Transverse colon (tissue), 4 donors: ENCODE measurements at regions of chr16 and their contacts with region 1.

Region 1: DNA sequence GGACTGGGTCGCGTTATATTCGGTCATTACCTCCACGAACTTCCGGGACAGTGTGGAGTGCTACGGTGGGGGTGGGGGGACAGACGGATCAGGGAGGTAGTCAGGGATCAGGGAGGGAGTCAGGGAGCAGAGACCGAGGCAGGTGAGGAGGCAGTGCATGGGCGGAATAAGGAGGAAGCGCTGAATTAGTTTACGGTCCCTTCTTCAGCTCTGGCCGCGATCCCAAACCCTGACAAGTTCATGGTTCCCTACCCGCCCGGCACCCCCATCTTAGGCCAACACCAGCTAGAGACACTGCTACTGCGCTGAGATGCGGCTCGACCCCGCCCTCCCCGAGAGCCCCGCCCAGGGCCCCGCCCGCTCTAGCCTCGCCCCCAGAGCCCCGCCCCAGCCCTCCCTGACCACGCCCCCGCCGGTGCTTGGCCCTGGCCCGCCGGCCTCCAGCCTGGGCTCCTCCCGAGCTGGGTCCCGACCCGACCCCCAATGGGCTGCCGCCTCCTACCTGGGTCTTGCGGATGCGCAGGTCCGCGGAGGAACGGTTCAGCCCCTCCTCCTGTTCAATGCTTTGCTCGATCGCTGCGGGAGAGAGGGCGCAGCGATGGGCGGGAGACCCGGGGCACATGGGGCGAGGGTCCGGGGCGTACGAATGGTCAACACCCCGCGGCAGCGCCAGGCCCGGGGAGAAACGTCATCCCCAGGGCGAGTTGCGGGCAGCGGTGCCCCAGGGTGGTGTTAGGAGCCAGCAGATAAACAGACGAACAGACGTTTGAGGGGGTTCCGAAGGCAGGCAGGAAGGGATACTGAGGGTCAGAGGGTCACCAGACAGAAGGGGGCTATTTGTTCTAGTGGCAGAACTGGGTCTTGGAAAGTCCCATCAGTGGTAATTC is 12.2 kb downstream of the HSD3B7 start:
- DNase-seq: peak; percentile 87
- H3K4me3 ChIP-seq: peak overlapping the region; percentile 39 to 56 (median 48)
- H3K27ac ChIP-seq: peak overlapping the region; percentile 77 to 89 (median 81)
- H3K4me1 ChIP-seq: peaks cover 6 to 18% (median 13%) of the 10 kb centered on the region in 4 donors
- H3K27me3 ChIP-seq: peaks cover 5% of the 10 kb centered on the region
- CTCF ChIP-seq: no peak
- EP300 ChIP-seq: no peak
- POLR2A ChIP-seq: peak; percentile 62

Region 2: DNA sequence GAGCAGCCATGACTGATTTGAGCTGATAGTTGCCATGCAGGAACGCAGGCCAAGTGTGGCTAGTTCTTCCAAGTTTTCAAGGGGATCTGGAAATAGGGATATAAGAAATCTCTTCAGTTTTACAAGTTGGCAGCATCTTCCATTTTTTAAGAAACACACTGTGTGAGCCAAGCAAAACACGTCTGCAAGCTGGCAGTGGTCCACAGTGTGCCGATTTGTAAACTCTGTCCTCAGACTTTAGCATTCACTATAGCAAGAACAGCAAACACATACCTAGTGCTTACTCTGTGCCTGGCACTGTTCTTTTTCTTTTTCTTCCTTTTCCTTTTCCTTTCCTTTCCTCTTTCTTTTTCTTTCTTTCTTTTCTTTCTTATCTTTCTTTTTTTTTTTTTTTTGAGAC is 45.5 kb before region 1 on chr16:
- in situ Hi-C with region 1: no loop called
- intact Hi-C with region 1: loop called (anchors 1 kb)
- DNase-seq: peak; percentile 54
- H3K4me3 ChIP-seq: no peak overlapping the region
- H3K27ac ChIP-seq: peak overlapping the region; percentile 91 to 97 (median 94)
- H3K4me1 ChIP-seq: peaks cover 14 to 39% (median 25%) of the 10 kb centered on the region in 4 donors
- H3K27me3 ChIP-seq: no peaks in the 10 kb centered on the region
- CTCF ChIP-seq: no peak
- EP300 ChIP-seq: no peak
- POLR2A ChIP-seq: no peak

Region 3: DNA sequence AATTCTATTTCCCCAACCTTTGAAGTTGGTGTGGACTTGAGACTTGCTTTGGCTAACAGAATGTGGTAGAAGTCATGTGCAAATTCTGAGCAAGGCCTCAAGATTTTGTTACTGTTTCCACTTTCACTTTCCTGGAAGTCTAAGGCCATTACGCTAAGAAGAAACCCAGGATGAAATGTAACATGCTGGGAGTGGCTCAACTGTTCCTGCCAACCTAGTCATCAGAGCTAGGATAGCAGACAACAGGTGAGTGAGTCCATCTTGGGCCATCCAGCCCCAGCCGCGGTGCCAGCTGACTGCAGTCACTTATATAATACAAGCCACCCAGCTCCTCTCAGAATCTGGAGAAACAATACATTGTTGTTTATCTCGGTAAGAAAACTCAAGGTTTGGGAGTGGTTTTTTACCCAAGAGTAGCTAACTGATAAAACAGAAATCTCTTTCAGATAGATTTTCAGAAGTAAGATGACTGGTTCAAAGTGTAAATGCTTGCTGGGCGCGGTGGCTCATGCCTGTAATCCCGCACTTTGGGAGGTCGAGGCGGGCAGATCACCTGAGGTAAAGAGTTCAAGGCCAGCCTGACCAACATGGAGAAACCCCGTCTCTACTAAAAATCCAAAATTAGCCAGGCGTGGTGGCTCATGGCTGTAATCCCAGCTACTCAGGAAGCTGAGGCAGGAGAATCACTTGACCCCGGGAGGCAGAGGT is 25.5 kb after region 1 on chr16:
- in situ Hi-C with region 1: no loop called
- intact Hi-C with region 1: loop called (anchors 1 kb)
- DNase-seq: no peak
- H3K4me3 ChIP-seq: no peak overlapping the region
- H3K27ac ChIP-seq: no peak overlapping the region
- H3K4me1 ChIP-seq: no peaks in the 10 kb centered on the region
- H3K27me3 ChIP-seq: no peaks in the 10 kb centered on the region
- CTCF ChIP-seq: no peak
- EP300 ChIP-seq: no peak
- POLR2A ChIP-seq: no peak

Region 4: DNA sequence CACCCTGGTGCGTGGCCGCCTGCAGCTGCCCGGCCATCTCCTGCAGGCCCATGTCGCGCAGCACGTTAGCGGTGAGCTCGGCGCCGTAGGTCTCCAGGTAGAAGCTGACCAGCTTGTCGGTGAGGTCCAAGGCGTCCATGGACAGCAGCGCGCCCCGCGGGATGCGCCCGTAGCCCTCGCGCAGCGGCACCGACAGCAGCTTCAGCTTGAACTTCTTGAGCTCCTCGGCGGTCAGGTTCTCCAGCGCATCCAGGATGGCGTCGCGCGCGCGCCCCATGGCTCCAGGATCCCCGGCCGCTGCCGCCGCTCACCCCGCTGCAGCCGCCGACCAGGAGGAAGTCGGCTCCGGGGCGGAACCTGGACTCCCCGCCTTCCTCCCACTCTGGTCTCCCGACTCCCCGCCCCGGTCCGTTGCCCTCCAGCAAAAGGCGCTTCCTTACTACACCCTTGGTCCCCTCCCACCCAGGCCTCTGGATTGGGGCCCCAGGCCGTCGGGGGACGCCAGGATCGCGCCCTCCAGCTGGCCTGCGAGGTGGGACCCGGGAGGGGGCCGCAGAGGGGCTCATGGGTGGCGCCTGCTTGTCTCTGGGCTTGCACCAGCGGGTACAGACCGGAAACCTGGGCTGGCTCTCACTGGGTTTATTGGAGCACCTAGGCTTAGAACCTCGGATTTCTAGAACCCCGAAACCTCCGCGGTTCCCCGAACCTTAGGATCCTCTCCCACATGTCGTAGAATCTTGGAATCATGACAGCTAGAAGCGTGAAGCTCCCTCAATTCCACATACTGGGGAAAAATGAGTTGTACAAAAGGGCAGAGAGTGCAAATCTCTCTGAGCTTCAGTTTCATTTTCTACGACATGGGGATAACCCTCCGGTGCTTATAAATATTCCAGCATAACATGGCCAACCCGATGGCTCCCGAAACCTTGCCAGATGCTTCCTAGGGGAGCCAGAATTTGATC is 205.5 kb after region 1 on chr16 and contains the start of gene PYCARD:
- in situ Hi-C with region 1: no loop called
- intact Hi-C with region 1: no loop called
- DNase-seq: peak; percentile 82
- H3K4me3 ChIP-seq: peak within 1 kb of the TSS; percentile 56 to 75 (median 64)
- H3K27ac ChIP-seq: peak within 1 kb of the TSS; percentile 80 to 90 (median 87)
- H3K4me1 ChIP-seq: peaks cover 15 to 33% (median 22%) of the 10 kb centered on the region in 4 donors
- H3K27me3 ChIP-seq: no peaks in the 10 kb centered on the region
- CTCF ChIP-seq: no peak
- EP300 ChIP-seq: no peak
- POLR2A ChIP-seq: peak; percentile 56
- total RNA-seq, gene PYCARD: 33.3 to 128 (median 90.6) TPM

Region 5: DNA sequence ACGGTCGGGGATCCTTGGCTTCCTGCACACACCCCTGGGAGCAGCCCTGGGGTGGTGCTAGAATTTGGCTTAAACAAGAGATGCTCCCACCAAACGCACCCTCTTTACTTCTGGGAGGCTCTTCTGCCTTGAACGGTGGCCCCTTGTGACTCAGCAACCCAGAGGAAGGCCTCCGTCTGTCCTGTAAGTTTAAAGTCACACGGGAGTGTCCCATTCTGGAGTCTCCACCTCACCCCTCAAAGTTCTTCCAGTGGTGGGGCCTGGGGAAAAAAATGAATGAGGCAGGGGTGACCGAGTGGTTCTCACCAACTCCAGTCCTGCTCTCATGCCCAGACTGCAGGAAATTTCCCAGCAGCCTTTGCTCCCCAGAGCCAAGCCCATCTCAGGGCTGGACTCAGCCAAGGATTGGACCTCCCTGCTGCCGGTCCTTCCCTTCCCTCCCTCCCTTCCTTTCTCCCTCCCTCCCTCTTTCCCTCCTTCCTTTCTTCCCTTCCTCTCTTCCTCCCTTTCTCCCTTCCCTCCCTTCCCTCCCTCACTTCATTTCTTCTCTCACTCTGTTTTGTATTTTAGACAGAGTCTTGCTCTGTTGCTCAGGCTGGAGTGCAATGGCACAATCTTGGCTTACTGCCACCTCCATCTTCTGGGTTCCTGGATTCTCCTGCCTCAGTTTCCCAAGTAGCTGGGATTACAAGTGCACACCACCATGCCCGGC is 407.3 kb after region 1 on chr16:
- in situ Hi-C with region 1: no loop called
- intact Hi-C with region 1: no loop called
- DNase-seq: no peak
- H3K4me3 ChIP-seq: no peak overlapping the region
- H3K27ac ChIP-seq: no peak overlapping the region
- H3K4me1 ChIP-seq: no peaks in the 10 kb centered on the region
- H3K27me3 ChIP-seq: no peaks in the 10 kb centered on the region
- CTCF ChIP-seq: no peak
- EP300 ChIP-seq: no peak
- POLR2A ChIP-seq: no peak